PC-9 (cell line): ENCODE measurements at regions of chr19 and their contacts with region 1.

Region 1: GRCh38 chr19:57435062-57435978 is at the start of gene ZNF749:
- DNase-seq: peak; percentile 97
- H3K4me3 ChIP-seq: peak within 1 kb of the TSS; percentile 81
- H3K27ac ChIP-seq: peak within 1 kb of the TSS; percentile 33
- H3K4me1 ChIP-seq: peaks cover 16% of the 10 kb centered on the region
- H3K27me3 ChIP-seq: no peaks in the 10 kb centered on the region
- CTCF ChIP-seq: no peak
- total RNA-seq, gene ZNF749: 17.9 and 19.4 TPM in 2 replicates

Region 2: DNA sequence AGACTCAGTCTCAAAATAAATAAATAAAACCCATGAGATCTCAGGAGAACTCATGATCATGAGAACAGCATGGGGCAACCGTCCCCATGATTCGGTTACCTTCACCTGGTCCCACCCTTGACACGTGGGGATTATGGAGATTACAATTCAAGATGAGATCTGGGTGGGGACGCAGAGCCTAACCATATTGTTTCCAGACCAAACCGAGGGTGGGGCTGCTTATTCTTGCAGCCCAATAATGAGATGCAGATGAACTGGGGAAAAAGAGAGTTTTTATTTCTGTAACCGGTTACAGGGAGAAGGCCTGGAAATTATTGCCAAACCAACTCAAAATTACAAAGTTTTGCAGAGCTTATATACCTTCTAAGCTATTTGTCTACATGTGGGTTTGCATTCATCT is 59.2 kb before region 1 on chr19:
- CTCF ChIA-PET with region 1: no interaction called
- POLR2A ChIA-PET with region 1: no interaction called
- intact Hi-C with region 1: no loop called
- DNase-seq: no peak
- H3K4me3 ChIP-seq: no peak overlapping the region
- H3K27ac ChIP-seq: no peak overlapping the region
- H3K4me1 ChIP-seq: no peaks in the 10 kb centered on the region
- H3K27me3 ChIP-seq: no peaks in the 10 kb centered on the region
- CTCF ChIP-seq: no peak

Region 3: GRCh38 chr19:57389730-57390598 is 45.4 kb before region 1 on chr19 and contains the start of gene ZNF548:
- CTCF ChIA-PET with region 1: no interaction called
- POLR2A ChIA-PET with region 1: interaction called, 5 read pairs
- intact Hi-C with region 1: loop called (anchors 2 kb)
- DNase-seq: peak; percentile 95 to 97
- H3K4me3 ChIP-seq: peak within 1 kb of the TSS; percentile 66
- H3K27ac ChIP-seq: peak within 1 kb of the TSS; percentile 28
- H3K4me1 ChIP-seq: peaks cover 15% of the 10 kb centered on the region
- H3K27me3 ChIP-seq: no peaks in the 10 kb centered on the region
- CTCF ChIP-seq: no peak
- total RNA-seq, gene ZNF548: 18.0 and 18.2 TPM in 2 replicates

Region 4: GRCh38 chr19:57465495-57466395 is 30.4 kb after region 1 on chr19:
- CTCF ChIA-PET with region 1: no interaction called
- POLR2A ChIA-PET with region 1: no interaction called
- intact Hi-C with region 1: no loop called
- DNase-seq: peak; percentile 14 to 55
- H3K4me3 ChIP-seq: no peak overlapping the region
- H3K27ac ChIP-seq: no peak overlapping the region
- H3K4me1 ChIP-seq: no peaks in the 10 kb centered on the region
- H3K27me3 ChIP-seq: no peaks in the 10 kb centered on the region
- CTCF ChIP-seq: peak; percentile 75